ENCODE measurements at regions of chr17 and their contacts with region 1.

Region 1: GRCh38 chr17:57243171-57243948 is 13.0 kb upstream of the MSI2 start:
- DNase-seq: peak; percentile 84
- ATAC-seq: peak; percentile 95
- H3K4me3 ChIP-seq: no peak overlapping the region
- H3K4me3 Mint-ChIP-seq: no peak overlapping the region
- H3K27ac ChIP-seq: no peak overlapping the region
- H3K27ac Mint-ChIP-seq: no peak overlapping the region
- H3K4me1 ChIP-seq: peaks cover 0 to 3% of the 10 kb centered on the region in 2 donors
- H3K4me1 Mint-ChIP-seq: no peaks in the 10 kb centered on the region
- H3K27me3 ChIP-seq: peaks cover 0 to 9% (median 4%) of the 10 kb centered on the region in 4 experiments
- H3K27me3 Mint-ChIP-seq: peaks cover 3% of the 10 kb centered on the region
- CTCF ChIP-seq: peak; percentile 100

Region 2: GRCh38 chr17:57228911-57229310 is 14.4 kb before region 1 on chr17:
- CTCF ChIA-PET with region 1: interaction called, 11 read pairs
- POLR2A ChIA-PET with region 1: no interaction called
- intact Hi-C with region 1: no loop called
- DNase-seq: no peak
- ATAC-seq: no peak
- H3K4me3 ChIP-seq: no peak overlapping the region
- H3K4me3 Mint-ChIP-seq: no peak overlapping the region
- H3K27ac ChIP-seq: no peak overlapping the region
- H3K27ac Mint-ChIP-seq: no peak overlapping the region
- H3K4me1 ChIP-seq: no peaks in the 10 kb centered on the region
- H3K4me1 Mint-ChIP-seq: no peaks in the 10 kb centered on the region
- H3K27me3 ChIP-seq: peaks cover 0 to 8% (median 3%) of the 10 kb centered on the region in 4 experiments
- H3K27me3 Mint-ChIP-seq: peaks cover 27% of the 10 kb centered on the region
- CTCF ChIP-seq: no peak

Region 3: GRCh38 chr17:57284984-57285646 is 41.8 kb after region 1 on chr17:
- CTCF ChIA-PET with region 1: interaction called, 11 read pairs
- POLR2A ChIA-PET with region 1: no interaction called
- intact Hi-C with region 1: loop called (anchors 1 kb)
- DNase-seq: peak; percentile 76
- ATAC-seq: peak; percentile 83
- H3K4me3 ChIP-seq: peak overlapping the region in 3 of 5 experiments; percentile 38 to 43 (median 40)
- H3K4me3 Mint-ChIP-seq: peak overlapping the region; percentile 83
- H3K27ac ChIP-seq: peak overlapping the region in 1 of 2 donors; percentile 44
- H3K27ac Mint-ChIP-seq: peak overlapping the region; percentile 74
- H3K4me1 ChIP-seq: peaks cover 14 to 24% of the 10 kb centered on the region in 2 donors
- H3K4me1 Mint-ChIP-seq: peaks cover 51% of the 10 kb centered on the region
- H3K27me3 ChIP-seq: no peaks in the 10 kb centered on the region
- H3K27me3 Mint-ChIP-seq: no peaks in the 10 kb centered on the region
- CTCF ChIP-seq: no peak

Region 4: DNA sequence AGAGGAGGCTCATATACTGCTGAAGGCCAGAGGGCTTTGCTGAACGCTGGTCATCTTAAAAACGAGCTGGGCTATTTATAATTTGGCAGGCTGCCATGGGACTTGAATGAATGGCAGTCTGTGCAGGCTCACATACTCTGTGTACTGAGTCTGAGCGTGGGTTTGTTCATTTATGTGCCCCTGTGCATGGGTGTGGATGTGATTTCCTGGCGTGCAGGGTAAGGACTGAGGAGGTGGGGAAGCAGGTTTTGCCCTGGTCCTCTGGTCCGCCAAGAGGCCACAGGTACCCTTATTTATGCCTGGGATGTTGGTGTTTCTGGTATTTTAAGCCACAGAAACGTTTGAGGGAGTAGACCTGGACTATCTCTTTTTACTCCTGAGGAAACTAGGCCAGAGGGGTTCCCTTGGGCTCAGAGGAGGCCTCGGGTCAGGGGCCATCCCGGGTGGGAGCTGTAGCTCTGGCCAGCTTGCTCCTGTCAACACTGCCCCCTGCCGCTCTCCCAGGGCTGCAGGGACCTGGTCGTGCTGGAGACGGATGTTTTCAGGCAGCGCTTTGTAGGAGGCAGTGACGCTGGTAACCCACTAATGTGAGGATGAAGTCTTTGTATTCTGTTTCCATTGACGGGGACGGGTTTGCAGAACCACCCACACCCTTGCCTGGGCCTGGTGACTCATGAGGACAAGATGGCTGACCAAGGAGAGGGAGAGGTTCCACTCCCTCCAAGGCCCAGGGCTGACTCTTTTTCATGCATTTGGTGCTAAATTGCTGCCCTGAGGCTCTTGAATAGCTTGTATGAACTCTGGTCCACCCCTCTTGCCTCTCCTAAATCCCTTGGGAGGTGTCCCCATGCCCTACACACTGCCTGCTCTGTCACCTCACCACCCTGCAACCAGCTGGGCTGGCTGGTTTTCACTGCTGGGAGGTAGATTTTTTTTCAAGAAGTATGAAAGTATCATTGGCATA is 197.4 kb after region 1 on chr17:
- CTCF ChIA-PET with region 1: interaction called, 14 read pairs
- POLR2A ChIA-PET with region 1: interaction called, 5 read pairs
- intact Hi-C with region 1: no loop called
- DNase-seq: peak; percentile 36
- ATAC-seq: peak; percentile 73
- H3K4me3 ChIP-seq: no peak overlapping the region
- H3K4me3 Mint-ChIP-seq: peak overlapping the region; percentile 40
- H3K27ac ChIP-seq: no peak overlapping the region
- H3K27ac Mint-ChIP-seq: peak overlapping the region; percentile 82
- H3K4me1 ChIP-seq: peaks cover 66 to 69% of the 10 kb centered on the region in 2 donors
- H3K4me1 Mint-ChIP-seq: peaks cover 89% of the 10 kb centered on the region
- H3K27me3 ChIP-seq: no peaks in the 10 kb centered on the region
- H3K27me3 Mint-ChIP-seq: no peaks in the 10 kb centered on the region
- CTCF ChIP-seq: peak; percentile 13

Region 5: GRCh38 chr17:57597531-57598453 is 354.4 kb after region 1 on chr17:
- CTCF ChIA-PET with region 1: interaction called, 29 read pairs
- POLR2A ChIA-PET with region 1: no interaction called
- intact Hi-C with region 1: no loop called
- DNase-seq: peak; percentile 41
- ATAC-seq: no peak
- H3K4me3 ChIP-seq: no peak overlapping the region
- H3K4me3 Mint-ChIP-seq: no peak overlapping the region
- H3K27ac ChIP-seq: no peak overlapping the region
- H3K27ac Mint-ChIP-seq: peak overlapping the region; percentile 69
- H3K4me1 ChIP-seq: peaks cover 21 to 26% of the 10 kb centered on the region in 2 donors
- H3K4me1 Mint-ChIP-seq: peaks cover 31% of the 10 kb centered on the region
- H3K27me3 ChIP-seq: no peaks in the 10 kb centered on the region
- H3K27me3 Mint-ChIP-seq: no peaks in the 10 kb centered on the region
- CTCF ChIP-seq: peak; percentile 68

Region 6: DNA sequence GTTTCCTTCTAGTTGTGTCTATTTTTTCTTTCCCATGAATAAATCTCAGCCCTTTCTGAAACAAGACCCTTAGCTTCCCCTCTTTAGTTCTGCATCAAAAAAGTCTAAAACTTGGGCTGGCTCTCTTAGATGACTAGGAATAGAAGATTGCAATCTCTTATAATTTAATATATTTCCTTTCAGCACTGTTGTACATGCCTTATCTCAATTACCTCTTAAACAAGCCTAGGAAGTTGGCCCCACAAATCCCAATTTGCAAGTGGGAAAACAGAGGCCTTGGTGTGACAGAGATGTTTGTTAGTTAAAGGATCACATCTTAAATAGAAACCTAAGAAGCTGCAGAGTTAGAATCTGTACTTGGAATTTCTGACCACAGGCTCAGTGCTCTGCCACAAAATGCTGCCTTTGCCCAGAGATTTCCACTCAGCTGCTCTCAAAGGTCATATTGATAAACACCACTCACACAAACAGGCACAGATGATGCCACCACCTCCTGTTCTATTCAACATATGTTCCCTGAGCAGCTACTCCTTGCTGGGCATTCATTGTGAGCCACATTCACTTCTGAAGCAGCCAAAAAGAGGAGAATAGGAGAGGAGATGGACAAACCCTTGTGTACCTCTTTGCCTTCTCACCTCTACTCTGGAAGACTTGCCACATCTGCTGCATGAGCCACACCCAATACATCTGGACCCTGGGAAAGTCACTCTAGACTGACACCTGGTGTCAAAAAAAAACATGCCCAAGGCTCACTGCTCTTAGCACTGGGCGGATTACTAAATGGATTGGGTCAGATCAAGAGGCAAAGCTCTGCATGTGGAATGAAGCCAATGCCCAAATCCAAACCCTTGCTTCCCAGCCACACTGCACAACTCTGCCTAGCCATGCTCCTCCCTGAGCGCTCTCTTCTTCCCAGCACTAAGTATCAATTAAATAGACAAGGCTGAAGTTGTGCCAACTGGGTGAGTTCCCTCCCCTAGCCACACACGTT is 496.3 kb after region 1 on chr17:
- CTCF ChIA-PET with region 1: interaction called, 129 read pairs
- POLR2A ChIA-PET with region 1: no interaction called
- intact Hi-C with region 1: no loop called
- DNase-seq: peak; percentile 49
- ATAC-seq: no peak
- H3K4me3 ChIP-seq: no peak overlapping the region
- H3K4me3 Mint-ChIP-seq: no peak overlapping the region
- H3K27ac ChIP-seq: no peak overlapping the region
- H3K27ac Mint-ChIP-seq: no peak overlapping the region
- H3K4me1 ChIP-seq: peaks cover 19 to 24% of the 10 kb centered on the region in 2 donors
- H3K4me1 Mint-ChIP-seq: peaks cover 20% of the 10 kb centered on the region
- H3K27me3 ChIP-seq: no peaks in the 10 kb centered on the region
- H3K27me3 Mint-ChIP-seq: peaks cover 3% of the 10 kb centered on the region
- CTCF ChIP-seq: peak; percentile 27

Region 7: DNA sequence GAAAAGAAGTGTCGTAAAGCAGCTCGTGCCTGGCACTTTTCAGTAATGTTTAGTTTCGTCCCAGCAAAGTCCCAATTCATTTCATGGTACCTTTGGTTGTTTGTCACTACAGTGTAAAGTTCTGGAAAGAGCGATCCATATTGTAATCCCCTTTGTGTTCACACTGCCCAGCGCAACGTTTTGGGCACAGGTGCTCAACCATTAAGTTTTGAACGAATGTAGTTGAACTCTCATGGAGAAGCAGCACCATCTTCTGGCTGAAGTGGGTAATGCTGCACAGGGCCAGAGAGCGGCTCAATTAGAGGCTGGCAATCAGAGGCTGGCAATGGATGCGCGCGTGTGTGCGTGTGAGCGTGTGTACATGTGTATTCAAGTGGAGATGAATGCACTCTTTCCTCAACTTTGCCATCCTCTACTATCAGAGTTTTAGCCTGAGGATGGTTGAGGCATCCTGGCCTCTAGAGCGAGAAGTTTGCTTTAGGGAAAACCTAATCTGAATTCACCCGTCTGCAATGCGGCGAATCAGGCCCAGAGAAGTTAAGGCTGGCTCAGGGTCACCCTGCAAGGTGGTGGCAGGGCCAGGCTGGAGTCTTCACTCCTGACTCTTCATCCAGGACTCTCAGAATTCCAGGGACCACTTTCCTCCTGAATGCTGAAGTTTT is 869.7 kb after region 1 on chr17:
- CTCF ChIA-PET with region 1: interaction called, 5 read pairs
- POLR2A ChIA-PET with region 1: no interaction called
- intact Hi-C with region 1: loop called (anchors 5 kb)
- DNase-seq: peak; percentile 83
- ATAC-seq: peak; percentile 94
- H3K4me3 ChIP-seq: no peak overlapping the region
- H3K4me3 Mint-ChIP-seq: no peak overlapping the region
- H3K27ac ChIP-seq: no peak overlapping the region
- H3K27ac Mint-ChIP-seq: peak overlapping the region; percentile 5
- H3K4me1 ChIP-seq: no peaks in the 10 kb centered on the region
- H3K4me1 Mint-ChIP-seq: no peaks in the 10 kb centered on the region
- H3K27me3 ChIP-seq: peaks cover 0 to 16% (median 6%) of the 10 kb centered on the region in 4 experiments
- H3K27me3 Mint-ChIP-seq: peaks cover 51% of the 10 kb centered on the region
- CTCF ChIP-seq: peak; percentile 95